CD14-positive monocyte (primary cell): ENCODE measurements at regions of chr10 and their contacts with region 1.

Region 1: GRCh38 chr10:86449926-86450558 is 71.5 kb downstream of the WAPL start:
- DNase-seq: peak; percentile 18 to 69 (median 48)
- H3K4me3 ChIP-seq: peak overlapping the region in 1 of 3 experiments; percentile 6
- H3K4me3 Mint-ChIP-seq: peak overlapping the region; percentile 32 to 46
- H3K27ac ChIP-seq: peak overlapping the region; percentile 79 to 88
- H3K27ac Mint-ChIP-seq: peak overlapping the region; percentile 91 to 98 (median 95)
- H3K4me1 ChIP-seq: peaks cover 40 to 45% of the 10 kb centered on the region in 2 donors
- H3K4me1 Mint-ChIP-seq: peaks cover 42% of the 10 kb centered on the region
- H3K27me3 ChIP-seq: no peaks in the 10 kb centered on the region
- H3K27me3 Mint-ChIP-seq: no peaks in the 10 kb centered on the region
- CTCF ChIP-seq: no peak

Region 2: GRCh38 chr10:86521678-86522509 is 71.9 kb after region 1 on chr10 and contains the start of gene WAPL:
- intact Hi-C with region 1: loop called in 1 of 2 experiments (anchors 5 kb)
- DNase-seq: peak; percentile 92 to 93 (median 92)
- H3K4me3 ChIP-seq: peak within 1 kb of the TSS; percentile 81 to 90 (median 86)
- H3K4me3 Mint-ChIP-seq: peak within 1 kb of the TSS; percentile 92 to 97
- H3K27ac ChIP-seq: peak within 1 kb of the TSS; percentile 87 to 93
- H3K27ac Mint-ChIP-seq: peak within 1 kb of the TSS; percentile 94 to 98 (median 96)
- H3K4me1 ChIP-seq: peaks cover 24 to 33% of the 10 kb centered on the region in 2 donors
- H3K4me1 Mint-ChIP-seq: peaks cover 47% of the 10 kb centered on the region
- H3K27me3 ChIP-seq: no peaks in the 10 kb centered on the region
- H3K27me3 Mint-ChIP-seq: peaks cover 0 to 2% (median 0%) of the 10 kb centered on the region in 3 donors
- CTCF ChIP-seq: no peak
- polyA plus RNA-seq, gene WAPL: 17.8 to 26.5 (median 18.3) TPM